GM18951 (cell line): ENCODE measurements at regions of chr1 and their contacts with region 1.

Region 1: DNA sequence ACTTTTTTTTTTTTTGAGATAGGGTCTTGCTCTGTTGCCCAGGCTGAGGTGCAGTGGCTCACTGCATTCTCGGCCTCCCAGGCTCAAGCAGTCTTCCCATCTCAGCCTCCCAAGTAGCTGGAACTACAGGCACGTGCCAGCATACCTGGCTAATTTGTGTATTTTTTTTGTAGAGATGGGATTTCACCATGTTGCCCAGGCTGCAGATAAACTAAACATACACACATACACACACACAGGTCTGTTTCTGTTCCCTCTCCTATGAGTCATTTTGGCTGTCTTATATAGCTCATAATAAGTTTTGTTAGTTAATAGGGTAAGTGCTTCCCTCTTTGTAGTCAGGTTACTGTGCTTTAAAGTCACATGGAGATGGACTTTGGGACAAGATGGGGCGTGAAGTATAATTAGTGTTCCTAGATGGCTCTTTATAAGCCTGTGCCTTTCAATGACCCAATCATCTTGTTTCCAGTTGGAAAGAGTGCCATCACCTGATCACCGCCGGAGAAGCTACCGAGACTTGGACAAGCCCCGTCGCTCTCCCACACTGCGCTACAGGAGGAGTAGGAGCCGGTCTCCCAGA is 9.1 kb downstream of the PRPF38A start:
- POLR2A ChIP-seq: no peak

Region 2: GRCh38 chr1:51359879-51360278 is 1053.6 kb before region 1 on chr1:
- in situ Hi-C with region 1: no loop called
- POLR2A ChIP-seq: no peak

Region 3: GRCh38 chr1:52683367-52683940 is 270.0 kb after region 1 on chr1:
- in situ Hi-C with region 1: loop called (anchors 10 kb)
- POLR2A ChIP-seq: no peak

Region 4: DNA sequence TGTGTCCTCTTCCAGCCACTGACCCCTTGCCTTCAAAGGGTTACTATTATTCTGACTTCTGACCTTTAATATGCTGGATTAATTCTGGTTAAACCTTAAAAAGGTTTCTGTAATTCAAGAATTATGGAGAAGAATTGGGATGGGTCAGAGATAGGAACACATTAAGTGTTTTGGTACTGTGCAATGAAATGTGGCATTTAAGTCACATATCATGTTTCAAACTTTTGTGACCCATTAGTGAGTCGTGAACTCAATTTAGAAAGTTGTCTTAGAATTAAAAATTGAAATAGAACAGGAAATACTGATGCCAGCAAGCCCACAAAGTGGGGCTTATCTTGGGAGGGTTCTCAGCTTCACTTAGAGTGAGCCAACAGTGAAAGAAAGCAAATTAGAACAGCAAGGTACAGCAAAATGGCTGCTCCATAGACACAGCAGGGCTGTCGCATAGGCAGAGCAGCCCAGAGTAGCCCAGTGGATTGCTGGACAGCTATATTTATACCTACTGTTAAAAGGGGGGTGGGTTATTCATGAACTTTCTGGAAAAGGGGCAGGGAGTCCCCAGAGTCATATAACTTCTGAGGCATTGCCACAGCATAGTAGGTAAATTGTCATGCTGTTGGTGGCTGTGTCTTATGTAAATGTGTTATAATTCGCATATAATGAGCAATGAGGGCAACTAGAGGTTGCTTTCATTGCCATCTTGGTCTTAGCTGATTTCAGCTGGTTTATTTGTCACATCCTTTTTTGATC is 524.1 kb after region 1 on chr1:
- in situ Hi-C with region 1: no loop called
- POLR2A ChIP-seq: no peak